ENCODE measurements at regions of chr1 and their contacts with region 1.

Region 1: GRCh38 chr1:116777831-116778830 is 23.9 kb downstream of the CD2 start:
- DNase-seq: no peak
- H3K4me3 Mint-ChIP-seq: peak overlapping the region; percentile 57
- H3K27ac Mint-ChIP-seq: peak overlapping the region; percentile 70
- H3K4me1 Mint-ChIP-seq: peaks cover 35% of the 10 kb centered on the region
- H3K27me3 Mint-ChIP-seq: no peaks in the 10 kb centered on the region

Region 2: GRCh38 chr1:116667575-116668105 is 110.5 kb before region 1 on chr1 and contains the start of gene IGSF3:
- intact Hi-C with region 1: no loop called
- DNase-seq: peak; percentile 47
- H3K4me3 Mint-ChIP-seq: peak within 1 kb of the TSS; percentile 78
- H3K27ac Mint-ChIP-seq: no peak within 1 kb of the TSS
- H3K4me1 Mint-ChIP-seq: peaks cover 13% of the 10 kb centered on the region
- H3K27me3 Mint-ChIP-seq: peaks cover 52% of the 10 kb centered on the region
- total RNA-seq, gene IGSF3: 4.6 and 4.9 TPM in 2 replicates

Region 3: GRCh38 chr1:116763787-116764465 is 14.2 kb before region 1 on chr1:
- intact Hi-C with region 1: no loop called
- DNase-seq: no peak
- H3K4me3 Mint-ChIP-seq: peak overlapping the region; percentile 84
- H3K27ac Mint-ChIP-seq: peak overlapping the region; percentile 100
- H3K4me1 Mint-ChIP-seq: peaks cover 88% of the 10 kb centered on the region
- H3K27me3 Mint-ChIP-seq: no peaks in the 10 kb centered on the region

Region 4: GRCh38 chr1:116791727-116792126 is 13.6 kb after region 1 on chr1:
- intact Hi-C with region 1: loop called (anchors 2 kb)
- DNase-seq: no peak
- H3K4me3 Mint-ChIP-seq: no peak overlapping the region
- H3K27ac Mint-ChIP-seq: no peak overlapping the region
- H3K4me1 Mint-ChIP-seq: peaks cover 45% of the 10 kb centered on the region
- H3K27me3 Mint-ChIP-seq: no peaks in the 10 kb centered on the region

Region 5: DNA sequence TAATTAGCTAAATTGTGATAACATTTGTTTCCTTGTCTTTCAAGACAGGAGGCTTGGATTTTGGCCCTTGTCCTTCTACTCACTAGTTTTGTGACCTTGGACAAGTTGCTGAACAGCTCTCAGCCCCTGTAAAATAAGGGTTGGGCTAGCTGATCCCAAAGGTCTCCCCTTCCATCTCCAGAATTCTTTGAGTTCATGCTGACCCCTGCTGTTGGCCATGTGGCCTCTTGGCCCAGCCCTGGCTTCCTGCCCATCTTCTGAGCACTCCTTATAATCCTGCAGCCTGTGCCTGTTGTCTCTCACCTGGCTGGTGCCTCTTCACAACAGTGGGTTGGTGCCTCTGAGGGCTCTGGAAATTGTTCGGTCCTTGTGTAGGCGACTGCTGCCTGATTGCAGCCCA is 141.7 kb after region 1 on chr1:
- intact Hi-C with region 1: no loop called
- DNase-seq: no peak
- H3K4me3 Mint-ChIP-seq: no peak overlapping the region
- H3K27ac Mint-ChIP-seq: peak overlapping the region; percentile 1
- H3K4me1 Mint-ChIP-seq: peaks cover 9% of the 10 kb centered on the region
- H3K27me3 Mint-ChIP-seq: no peaks in the 10 kb centered on the region